ENCODE measurements at regions of chr15 and their contacts with region 1.

Region 1: GRCh38 chr15:65032801-65033537 is 3.5 kb upstream of the MTFMT start:
- DNase-seq: peak; percentile 84
- H3K4me3 Mint-ChIP-seq: no peak overlapping the region
- H3K27ac Mint-ChIP-seq: no peak overlapping the region
- H3K4me1 Mint-ChIP-seq: peaks cover 7% of the 10 kb centered on the region
- H3K27me3 Mint-ChIP-seq: no peaks in the 10 kb centered on the region
- CTCF ChIP-seq: peak; percentile 45

Region 2: DNA sequence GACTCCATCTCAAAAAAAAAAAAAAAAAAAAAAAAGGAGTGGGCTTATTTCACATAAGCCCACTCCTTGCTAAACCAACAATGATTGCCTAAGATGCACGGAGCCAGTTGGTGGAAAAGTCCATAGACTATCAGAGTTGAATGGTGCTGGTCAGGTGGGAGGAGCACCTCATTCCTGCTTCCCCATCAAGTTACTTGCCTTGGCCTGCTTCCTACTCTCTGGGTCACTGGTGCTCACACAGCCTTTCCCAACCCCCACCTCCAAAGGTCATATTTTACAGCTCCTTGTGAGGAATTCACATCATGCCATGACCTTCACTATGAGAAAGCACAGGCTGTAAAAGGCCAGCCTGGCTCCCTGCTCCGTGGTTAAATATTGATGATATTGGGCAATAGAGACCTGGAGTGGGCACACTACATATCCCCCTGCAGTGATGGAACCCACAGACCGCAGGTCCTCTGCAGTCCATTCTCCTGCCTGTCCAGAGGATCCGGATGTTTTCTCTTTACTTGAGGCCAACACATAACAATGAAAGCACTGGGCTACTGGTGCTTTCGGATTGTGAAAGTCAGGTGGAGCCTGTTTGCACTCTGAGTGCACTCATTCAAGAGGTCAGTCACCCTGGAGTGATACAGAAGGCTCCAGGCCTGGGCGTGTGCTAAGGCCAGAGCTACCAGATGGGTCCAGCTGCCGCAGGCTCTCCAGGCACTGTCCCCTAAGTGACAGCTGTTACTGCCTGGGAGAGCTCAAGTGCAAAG is 11.9 kb after region 1 on chr15 and contains the start of gene SLC51B:
- CTCF ChIA-PET with region 1: interaction called, 5 read pairs
- POLR2A ChIA-PET with region 1: interaction called, 12 read pairs
- intact Hi-C with region 1: no loop called
- DNase-seq: no peak
- H3K4me3 Mint-ChIP-seq: no peak within 1 kb of the TSS
- H3K27ac Mint-ChIP-seq: peak within 1 kb of the TSS; percentile 68
- H3K4me1 Mint-ChIP-seq: peaks cover 12% of the 10 kb centered on the region
- H3K27me3 Mint-ChIP-seq: no peaks in the 10 kb centered on the region
- CTCF ChIP-seq: no peak
- total RNA-seq, gene SLC51B: not detected in 2 replicates

Region 3: GRCh38 chr15:65086017-65086679 is 53.2 kb after region 1 on chr15:
- CTCF ChIA-PET with region 1: interaction called, 8 read pairs
- POLR2A ChIA-PET with region 1: interaction called, 3 read pairs
- intact Hi-C with region 1: loop called (anchors 1 kb)
- DNase-seq: peak; percentile 66
- H3K4me3 Mint-ChIP-seq: no peak overlapping the region
- H3K27ac Mint-ChIP-seq: no peak overlapping the region
- H3K4me1 Mint-ChIP-seq: peaks cover 7% of the 10 kb centered on the region
- H3K27me3 Mint-ChIP-seq: peaks cover 38% of the 10 kb centered on the region
- CTCF ChIP-seq: peak; percentile 51

Region 4: DNA sequence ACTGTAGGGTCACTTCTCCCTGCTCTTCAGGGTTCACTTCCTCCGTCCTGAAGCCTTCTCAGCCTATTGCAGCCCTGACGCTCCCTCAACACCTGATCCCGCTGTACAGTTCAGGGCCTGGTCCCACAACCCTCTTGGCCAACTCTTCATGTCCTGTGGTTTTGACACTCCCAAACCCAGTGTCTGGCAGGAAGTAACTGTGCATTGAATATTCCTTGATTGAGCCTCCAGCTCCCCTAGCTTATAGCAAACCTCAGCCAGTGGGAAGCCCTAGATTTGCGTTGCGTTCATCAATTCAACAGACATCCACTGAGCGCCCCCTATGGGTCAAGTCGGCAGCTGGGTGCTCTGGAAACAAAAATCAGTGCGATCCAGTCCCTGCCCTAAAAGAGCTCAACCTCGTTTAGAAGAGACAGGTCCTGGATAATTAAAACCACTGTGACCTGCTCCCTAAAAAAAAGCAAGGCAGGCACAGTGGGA is 68.5 kb after region 1 on chr15:
- CTCF ChIA-PET with region 1: no interaction called
- POLR2A ChIA-PET with region 1: no interaction called
- intact Hi-C with region 1: loop called (anchors 1 kb)
- DNase-seq: peak; percentile 61
- H3K4me3 Mint-ChIP-seq: no peak overlapping the region
- H3K27ac Mint-ChIP-seq: no peak overlapping the region
- H3K4me1 Mint-ChIP-seq: no peaks in the 10 kb centered on the region
- H3K27me3 Mint-ChIP-seq: no peaks in the 10 kb centered on the region
- CTCF ChIP-seq: peak; percentile 78

Region 5: GRCh38 chr15:65184868-65185738 is 152.1 kb after region 1 on chr15 and contains the start of gene CLPX:
- CTCF ChIA-PET with region 1: interaction called, 3 read pairs
- POLR2A ChIA-PET with region 1: interaction called, 3 read pairs
- intact Hi-C with region 1: loop called (anchors 2 kb)
- DNase-seq: peak; percentile 94
- H3K4me3 Mint-ChIP-seq: peak within 1 kb of the TSS; percentile 94
- H3K27ac Mint-ChIP-seq: peak within 1 kb of the TSS; percentile 96
- H3K4me1 Mint-ChIP-seq: peaks cover 6% of the 10 kb centered on the region
- H3K27me3 Mint-ChIP-seq: no peaks in the 10 kb centered on the region
- CTCF ChIP-seq: no peak
- total RNA-seq, gene CLPX: 47.9 and 48.9 TPM in 2 replicates

Measured in MCF 10A (cell line).